AG04449 (cell line): ENCODE measurements at regions of chr6 and their contacts with region 1.

Region 1: GRCh38 chr6:2853761-2854395 is 12.2 kb upstream of the SERPINB1 start:
- DNase-seq: peak; percentile 41
- H3K4me3 ChIP-seq: peak overlapping the region; percentile 57
- CTCF ChIP-seq: peak; percentile 2

Region 2: DNA sequence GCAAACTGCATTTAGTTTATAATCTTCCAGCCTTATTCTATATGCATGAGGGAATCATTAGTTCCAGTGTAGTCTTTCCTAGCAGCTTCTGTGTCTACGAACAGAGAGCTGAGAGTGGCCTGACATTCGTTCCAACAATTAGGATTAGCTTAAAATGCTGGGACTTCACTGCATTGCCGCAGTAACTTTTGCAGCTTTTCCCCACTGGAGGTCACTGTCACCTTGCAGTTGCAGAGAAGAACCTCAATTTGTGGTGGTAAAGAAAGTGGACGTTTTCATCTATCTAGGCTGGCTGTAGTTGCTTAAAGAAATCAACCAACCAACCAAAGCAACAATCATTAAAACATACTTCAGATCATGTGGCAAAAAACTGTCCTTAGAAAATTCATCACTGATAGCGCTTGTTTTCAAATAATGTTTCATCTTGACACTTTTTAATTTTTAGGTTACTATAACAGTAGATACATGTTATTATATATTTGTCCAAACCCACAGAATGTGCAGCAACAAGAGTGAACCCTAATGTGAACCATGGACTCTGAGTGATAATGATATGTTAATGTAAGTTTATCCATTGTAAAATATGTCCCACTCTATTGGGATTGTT is 115.4 kb before region 1 on chr6:
- CTCF ChIA-PET with region 1: interaction called, 21 read pairs
- POLR2A ChIA-PET with region 1: no interaction called
- DNase-seq: no peak
- H3K4me3 ChIP-seq: no peak overlapping the region
- CTCF ChIP-seq: peak; percentile 62

Region 3: DNA sequence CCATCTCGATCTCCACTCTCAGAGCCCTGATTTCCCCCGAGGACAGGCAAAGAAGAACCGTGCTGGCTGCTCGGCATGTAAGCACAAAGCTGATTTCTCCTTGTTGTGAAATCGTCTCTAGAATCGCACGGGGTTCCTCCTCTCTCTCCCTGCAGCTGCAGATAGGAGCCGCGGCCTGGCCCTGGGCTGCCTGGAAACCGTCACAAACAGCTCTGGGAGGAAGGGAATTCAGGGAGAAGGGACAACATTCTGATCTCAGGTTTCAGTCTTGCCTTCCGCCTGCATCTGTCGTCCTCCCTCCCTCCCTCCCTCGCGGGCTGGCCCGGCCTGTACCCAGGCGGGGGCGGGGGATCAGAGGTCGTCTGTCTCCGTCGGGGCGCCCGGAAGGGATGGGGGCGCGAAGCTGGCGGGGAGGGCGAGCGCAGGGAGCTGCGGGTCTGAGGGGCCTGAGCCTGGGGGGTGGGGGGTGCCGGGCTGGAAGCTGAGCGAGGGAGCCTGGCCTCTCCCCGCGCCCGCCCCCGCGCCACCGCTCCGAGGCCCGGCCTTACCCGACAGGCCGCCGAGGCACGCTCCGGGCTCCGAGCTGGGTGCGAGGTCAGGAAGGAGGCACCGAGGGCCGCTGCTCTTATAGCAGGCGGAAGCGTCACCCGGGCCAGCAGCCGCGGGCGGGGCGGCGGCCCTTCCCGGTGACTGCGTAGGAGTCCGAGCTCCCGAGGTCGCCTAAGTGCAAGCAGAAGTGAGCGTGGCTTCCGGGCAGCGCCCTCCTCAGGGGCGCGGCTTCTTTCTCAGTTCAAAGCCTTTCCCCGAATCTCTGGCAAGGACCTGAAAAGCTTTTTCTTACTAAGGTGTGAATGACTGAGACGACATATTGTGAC is 12.4 kb before region 1 on chr6 and contains the start of gene SERPINB1:
- CTCF ChIA-PET with region 1: interaction called, 64 read pairs
- POLR2A ChIA-PET with region 1: interaction called, 4 read pairs
- DNase-seq: peak; percentile 72
- H3K4me3 ChIP-seq: peak within 1 kb of the TSS; percentile 55
- CTCF ChIP-seq: no peak

Region 4: GRCh38 chr6:2866181-2866846 is 12.4 kb after region 1 on chr6:
- CTCF ChIA-PET with region 1: interaction called, 48 read pairs
- POLR2A ChIA-PET with region 1: no interaction called
- DNase-seq: no peak
- H3K4me3 ChIP-seq: no peak overlapping the region
- CTCF ChIP-seq: no peak

Region 5: DNA sequence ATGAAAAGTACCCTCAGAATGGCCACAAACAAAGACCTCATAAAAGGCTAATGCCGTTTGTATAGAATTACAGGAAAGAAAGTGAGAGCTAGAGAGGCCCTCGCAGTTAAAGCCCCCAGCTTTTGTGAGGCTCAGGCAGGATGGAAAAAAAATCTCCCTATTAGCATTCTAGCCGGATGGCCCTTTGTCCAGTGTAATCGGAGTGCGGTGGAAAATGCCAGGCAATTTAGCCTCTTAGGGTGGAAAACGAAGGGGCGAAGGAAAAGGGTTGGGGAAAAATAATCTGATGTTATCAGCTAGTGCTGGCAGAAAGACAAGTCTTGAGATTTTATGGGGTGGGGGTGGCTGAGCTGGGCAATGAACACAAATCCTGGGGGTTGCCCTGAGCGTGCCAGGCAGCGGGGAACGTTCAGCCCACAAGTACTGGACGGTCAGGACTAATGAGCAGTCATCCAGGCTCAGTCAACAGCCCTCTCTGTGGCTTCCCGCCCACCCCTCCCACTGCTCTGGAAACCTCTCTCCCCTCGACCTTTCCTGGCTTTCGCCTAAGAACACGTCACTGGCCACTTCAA is 497.3 kb after region 1 on chr6:
- CTCF ChIA-PET with region 1: no interaction called
- POLR2A ChIA-PET with region 1: no interaction called
- DNase-seq: no peak
- H3K4me3 ChIP-seq: no peak overlapping the region
- CTCF ChIP-seq: no peak